MCF 10A (cell line): ENCODE measurements at regions of chr9 and their contacts with region 1.

Region 1: GRCh38 chr9:35790385-35791296 is 750 bp upstream of the NPR2 start:
- DNase-seq: peak; percentile 78
- H3K4me3 Mint-ChIP-seq: no peak overlapping the region
- H3K27ac Mint-ChIP-seq: no peak overlapping the region
- H3K4me1 Mint-ChIP-seq: peaks cover 6% of the 10 kb centered on the region
- H3K27me3 Mint-ChIP-seq: no peaks in the 10 kb centered on the region
- CTCF ChIP-seq: peak; percentile 69

Region 2: GRCh38 chr9:35814841-35815543 is 24.4 kb after region 1 on chr9 and contains the start of gene HINT2:
- CTCF ChIA-PET with region 1: interaction called, 33 read pairs
- POLR2A ChIA-PET with region 1: interaction called, 5 read pairs
- intact Hi-C with region 1: loop called (anchors 1 kb)
- DNase-seq: peak; percentile 99
- H3K4me3 Mint-ChIP-seq: peak within 1 kb of the TSS; percentile 87
- H3K27ac Mint-ChIP-seq: peak within 1 kb of the TSS; percentile 84
- H3K4me1 Mint-ChIP-seq: peaks cover 22% of the 10 kb centered on the region
- H3K27me3 Mint-ChIP-seq: peaks cover 11% of the 10 kb centered on the region
- CTCF ChIP-seq: no peak
- total RNA-seq, gene HINT2: 45.4 and 48.2 TPM in 2 replicates

Region 3: GRCh38 chr9:35882263-35882848 is 91.7 kb after region 1 on chr9:
- CTCF ChIA-PET with region 1: interaction called, 63 read pairs
- POLR2A ChIA-PET with region 1: interaction called, 6 read pairs
- intact Hi-C with region 1: loop called (anchors 1 kb)
- DNase-seq: peak; percentile 80
- H3K4me3 Mint-ChIP-seq: no peak overlapping the region
- H3K27ac Mint-ChIP-seq: no peak overlapping the region
- H3K4me1 Mint-ChIP-seq: peaks cover 6% of the 10 kb centered on the region
- H3K27me3 Mint-ChIP-seq: peaks cover 16% of the 10 kb centered on the region
- CTCF ChIP-seq: peak; percentile 95

Region 4: DNA sequence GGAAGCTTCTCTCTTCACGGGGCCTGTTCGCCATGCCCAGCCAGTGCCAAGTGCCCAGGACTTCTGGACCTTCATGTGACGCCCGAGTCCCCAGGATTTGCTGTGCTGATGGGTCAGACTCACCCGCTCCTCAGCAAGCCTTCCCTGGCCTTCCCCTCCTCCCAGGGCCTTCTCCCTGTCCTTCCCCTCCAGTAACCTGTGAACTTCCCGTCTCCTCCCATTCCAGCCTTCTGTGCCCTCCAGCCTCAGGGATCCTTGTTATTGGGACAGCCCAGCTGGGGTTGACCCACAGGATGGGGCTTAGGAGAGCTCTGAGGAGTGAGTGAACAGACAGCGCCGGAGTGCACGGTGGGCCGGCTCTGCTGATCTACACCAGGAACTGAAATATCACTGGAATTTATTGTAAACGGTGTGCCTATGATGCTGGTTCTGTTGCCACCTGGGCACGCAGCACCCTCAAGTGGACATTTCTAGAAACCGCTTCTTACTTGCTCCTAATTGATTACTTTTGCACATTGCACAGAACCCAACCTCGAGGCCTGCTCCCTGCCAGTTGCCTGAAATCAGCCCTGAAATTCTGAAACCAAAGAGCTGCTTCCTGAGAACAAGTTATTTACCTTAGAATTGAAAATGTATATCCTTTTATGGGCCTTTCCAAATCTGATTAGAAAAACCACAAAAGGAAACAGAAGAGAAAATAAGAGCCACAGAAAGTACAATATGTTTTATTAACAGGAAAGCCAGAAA is 120.1 kb after region 1 on chr9:
- CTCF ChIA-PET with region 1: interaction called, 17 read pairs
- POLR2A ChIA-PET with region 1: interaction called, 4 read pairs
- intact Hi-C with region 1: loop called (anchors 2 kb)
- DNase-seq: peak; percentile 86
- H3K4me3 Mint-ChIP-seq: peak overlapping the region; percentile 53
- H3K27ac Mint-ChIP-seq: peak overlapping the region; percentile 88
- H3K4me1 Mint-ChIP-seq: peaks cover 42% of the 10 kb centered on the region
- H3K27me3 Mint-ChIP-seq: no peaks in the 10 kb centered on the region
- CTCF ChIP-seq: peak; percentile 55

Region 5: DNA sequence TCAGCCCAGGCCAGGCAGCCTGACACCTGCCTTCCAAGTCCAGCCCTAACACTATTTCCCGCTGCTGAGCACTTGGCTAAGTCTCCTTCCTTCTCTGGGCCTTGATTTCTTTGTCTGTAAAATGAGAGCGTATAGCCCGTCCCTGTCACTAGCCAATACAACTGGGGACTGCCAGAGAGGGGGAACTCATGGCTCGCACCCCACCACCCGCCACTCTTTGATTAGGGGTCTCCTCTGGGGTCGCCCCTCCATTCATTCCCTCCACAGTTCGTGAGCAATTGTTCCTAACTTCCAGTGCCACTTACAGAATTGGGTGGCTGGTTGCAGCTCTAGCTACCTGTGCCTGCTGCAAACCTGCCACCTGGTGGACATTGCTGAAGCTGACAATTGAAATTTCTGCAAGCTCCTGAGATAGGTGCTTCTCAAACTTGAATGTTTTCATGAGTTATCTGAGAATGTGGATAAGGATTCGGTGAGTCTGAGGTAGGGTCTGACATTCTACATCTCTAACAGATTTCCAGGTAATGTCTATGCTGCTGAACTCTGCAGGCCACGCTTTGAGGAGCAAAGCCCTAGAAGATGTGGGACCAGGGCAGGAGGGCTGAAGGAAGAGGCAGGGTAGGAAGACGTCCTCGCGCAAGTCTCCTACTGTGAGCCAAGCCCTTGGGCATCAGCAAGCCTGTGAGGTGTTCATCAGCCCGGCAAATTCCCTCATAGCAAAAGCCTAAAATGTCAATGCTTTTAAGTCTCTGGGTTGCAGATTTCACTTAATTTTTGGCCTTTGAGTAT is 232.8 kb after region 1 on chr9:
- CTCF ChIA-PET with region 1: interaction called, 6 read pairs
- POLR2A ChIA-PET with region 1: no interaction called
- intact Hi-C with region 1: loop called (anchors 10 kb)
- DNase-seq: peak; percentile 74
- H3K4me3 Mint-ChIP-seq: no peak overlapping the region
- H3K27ac Mint-ChIP-seq: no peak overlapping the region
- H3K4me1 Mint-ChIP-seq: peaks cover 6% of the 10 kb centered on the region
- H3K27me3 Mint-ChIP-seq: peaks cover 12% of the 10 kb centered on the region
- CTCF ChIP-seq: peak; percentile 84